ENCODE measurements at regions of chrX and their contacts with region 1.

Region 1: GRCh38 chrX:47233337-47234113 is 716 bp downstream of the USP11 start:
- DNase-seq: peak; percentile 95
- H3K4me3 ChIP-seq: peak overlapping the region; percentile 51 to 81 (median 74)
- H3K27ac ChIP-seq: peak overlapping the region; percentile 98
- H3K4me1 ChIP-seq: peaks cover 10% of the 10 kb centered on the region
- H3K27me3 ChIP-seq: no peaks in the 10 kb centered on the region
- CTCF ChIP-seq: no peak

Region 2: GRCh38 chrX:47297871-47298270 is 64.3 kb after region 1 on chrX:
- CTCF ChIA-PET with region 1: no interaction called
- dilution Hi-C with region 1: no loop called
- in situ Hi-C with region 1: no loop called
- intact Hi-C with region 1: loop called (anchors 5 kb)
- DNase-seq: peak; percentile 84
- H3K4me3 ChIP-seq: no peak overlapping the region
- H3K27ac ChIP-seq: peak overlapping the region; percentile 62
- H3K4me1 ChIP-seq: no peaks in the 10 kb centered on the region
- H3K27me3 ChIP-seq: no peaks in the 10 kb centered on the region
- CTCF ChIP-seq: no peak

Region 3: GRCh38 chrX:47311932-47312774 is 78.6 kb after region 1 on chrX:
- CTCF ChIA-PET with region 1: no interaction called
- dilution Hi-C with region 1: no loop called
- in situ Hi-C with region 1: no loop called
- intact Hi-C with region 1: loop called (anchors 1 kb)
- DNase-seq: peak; percentile 62
- H3K4me3 ChIP-seq: no peak overlapping the region
- H3K27ac ChIP-seq: no peak overlapping the region
- H3K4me1 ChIP-seq: no peaks in the 10 kb centered on the region
- H3K27me3 ChIP-seq: no peaks in the 10 kb centered on the region
- CTCF ChIP-seq: peak; percentile 50 to 72

Region 4: DNA sequence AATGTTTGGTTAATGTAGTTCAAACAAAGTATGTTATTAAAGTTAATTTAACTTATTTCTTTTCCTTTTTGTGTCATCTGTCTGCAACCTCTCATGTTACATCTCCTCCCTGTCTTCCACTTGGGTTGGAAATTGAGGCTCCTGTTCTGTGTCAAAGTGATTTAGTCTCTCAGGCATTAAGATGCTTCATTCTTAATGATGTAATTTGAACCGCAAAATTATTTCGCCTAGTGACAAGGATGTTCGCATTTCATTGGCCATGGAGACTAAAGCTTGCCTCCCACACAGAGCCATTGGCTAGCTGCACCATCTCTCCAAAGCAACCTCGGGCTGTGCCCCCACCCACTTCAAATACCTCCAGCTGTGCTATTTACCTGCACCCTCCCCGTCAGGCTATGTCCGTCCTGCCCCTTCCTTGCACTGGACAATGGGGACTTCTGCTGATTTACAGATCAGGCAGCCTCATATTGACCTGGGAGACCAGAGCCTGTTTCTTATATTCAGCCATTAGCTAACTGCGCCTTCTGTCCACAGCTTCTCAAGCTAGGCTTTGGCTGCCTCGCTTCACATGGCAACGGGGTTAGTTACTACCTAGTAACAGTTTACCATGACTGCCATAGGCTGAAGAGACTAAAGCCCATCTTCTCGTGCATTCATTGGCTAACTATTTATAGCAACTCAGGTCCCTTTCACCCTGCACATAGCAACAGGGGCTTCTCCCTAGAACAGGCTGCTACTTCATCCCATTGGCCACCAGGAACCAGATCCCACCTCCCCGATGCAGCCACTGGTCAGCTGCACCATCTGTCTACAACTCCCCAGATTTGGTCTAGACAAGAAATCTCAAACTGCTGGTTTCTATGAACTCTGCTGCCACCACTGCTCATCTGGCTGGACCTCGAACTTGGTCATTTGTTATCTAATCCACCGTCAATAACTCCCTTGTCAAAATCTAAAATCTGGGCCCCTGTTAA is 128.3 kb after region 1 on chrX:
- CTCF ChIA-PET with region 1: no interaction called
- dilution Hi-C with region 1: no loop called
- in situ Hi-C with region 1: no loop called
- intact Hi-C with region 1: loop called (anchors 5 kb)
- DNase-seq: peak; percentile 86
- H3K4me3 ChIP-seq: peak overlapping the region; percentile 11 to 44 (median 22)
- H3K27ac ChIP-seq: peak overlapping the region; percentile 65
- H3K4me1 ChIP-seq: no peaks in the 10 kb centered on the region
- H3K27me3 ChIP-seq: no peaks in the 10 kb centered on the region
- CTCF ChIP-seq: peak in 1 of 2 donors; percentile 11

Measured in mammary epithelial cell (primary cell).